ENCODE measurements at regions of chr5 and their contacts with region 1.

Region 1: GRCh38 chr5:132180134-132180745 is 47.4 kb downstream of the P4HA2 start:
- DNase-seq: peak; percentile 82
- H3K4me3 Mint-ChIP-seq: no peak overlapping the region
- H3K27ac Mint-ChIP-seq: no peak overlapping the region
- H3K4me1 Mint-ChIP-seq: peaks cover 16% of the 10 kb centered on the region
- H3K27me3 Mint-ChIP-seq: no peaks in the 10 kb centered on the region
- CTCF ChIP-seq: peak; percentile 89

Region 2: GRCh38 chr5:132073231-132074013 is 106.8 kb before region 1 on chr5 and contains the start of gene CSF2:
- CTCF ChIA-PET with region 1: interaction called, 12 read pairs
- POLR2A ChIA-PET with region 1: no interaction called
- intact Hi-C with region 1: no loop called
- DNase-seq: peak; percentile 85
- H3K4me3 Mint-ChIP-seq: peak within 1 kb of the TSS; percentile 35
- H3K27ac Mint-ChIP-seq: no peak within 1 kb of the TSS
- H3K4me1 Mint-ChIP-seq: peaks cover 25% of the 10 kb centered on the region
- H3K27me3 Mint-ChIP-seq: no peaks in the 10 kb centered on the region
- CTCF ChIP-seq: no peak
- total RNA-seq, gene CSF2: not detected in 2 replicates

Region 3: DNA sequence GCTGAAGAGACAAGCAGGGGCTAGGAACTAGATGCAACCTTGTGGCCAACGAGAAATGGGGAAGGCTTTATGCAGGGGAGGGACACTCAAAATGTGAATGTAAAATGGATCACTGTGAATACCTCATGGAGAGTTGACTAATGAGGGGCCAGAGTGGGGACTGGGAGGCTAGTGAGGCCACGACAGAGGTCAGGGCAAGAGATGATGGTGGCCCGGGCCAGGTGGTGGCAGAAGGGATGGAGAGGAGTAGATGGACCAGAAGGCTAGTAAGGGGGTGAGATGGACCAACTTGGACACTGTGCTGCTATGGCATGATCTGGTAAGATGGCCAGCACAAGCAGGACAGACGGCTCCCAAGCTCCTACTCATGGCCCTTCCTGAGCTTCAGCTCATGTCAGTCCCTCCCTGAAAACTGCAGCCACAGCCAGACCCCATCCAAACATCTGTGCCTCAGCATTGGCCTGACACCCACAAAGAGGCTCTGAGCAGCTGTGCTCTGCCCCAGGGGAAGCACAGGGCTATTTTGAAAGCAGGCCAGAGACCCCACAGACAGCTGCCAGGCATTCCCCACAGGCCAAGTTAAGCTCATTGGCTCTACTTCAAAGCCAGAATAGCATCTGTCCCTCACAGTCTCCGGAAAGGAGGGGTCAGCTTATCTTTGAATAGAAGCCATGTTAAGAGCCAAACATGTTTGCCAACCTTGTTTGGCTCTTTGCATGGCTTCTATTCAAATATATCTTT is 25.3 kb after region 1 on chr5:
- CTCF ChIA-PET with region 1: interaction called, 19 read pairs
- POLR2A ChIA-PET with region 1: interaction called, 3 read pairs
- intact Hi-C with region 1: no loop called
- DNase-seq: no peak
- H3K4me3 Mint-ChIP-seq: no peak overlapping the region
- H3K27ac Mint-ChIP-seq: no peak overlapping the region
- H3K4me1 Mint-ChIP-seq: peaks cover 12% of the 10 kb centered on the region
- H3K27me3 Mint-ChIP-seq: no peaks in the 10 kb centered on the region
- CTCF ChIP-seq: no peak

Region 4: GRCh38 chr5:132227485-132228240 is 47.4 kb after region 1 on chr5 and contains the start of gene P4HA2:
- CTCF ChIA-PET with region 1: interaction called, 18 read pairs
- POLR2A ChIA-PET with region 1: interaction called, 3 read pairs
- intact Hi-C with region 1: loop called (anchors 1 kb)
- DNase-seq: peak; percentile 86
- H3K4me3 Mint-ChIP-seq: peak within 1 kb of the TSS; percentile 74
- H3K27ac Mint-ChIP-seq: no peak within 1 kb of the TSS
- H3K4me1 Mint-ChIP-seq: peaks cover 32% of the 10 kb centered on the region
- H3K27me3 Mint-ChIP-seq: no peaks in the 10 kb centered on the region
- CTCF ChIP-seq: peak; percentile 21
- total RNA-seq, gene P4HA2: 53.1 and 91.1 TPM in 2 replicates

Region 5: GRCh38 chr5:132310141-132310834 is 130.0 kb after region 1 on chr5:
- CTCF ChIA-PET with region 1: interaction called, 3 read pairs
- POLR2A ChIA-PET with region 1: no interaction called
- intact Hi-C with region 1: loop called (anchors 5 kb)
- DNase-seq: no peak
- H3K4me3 Mint-ChIP-seq: no peak overlapping the region
- H3K27ac Mint-ChIP-seq: no peak overlapping the region
- H3K4me1 Mint-ChIP-seq: peaks cover 17% of the 10 kb centered on the region
- H3K27me3 Mint-ChIP-seq: no peaks in the 10 kb centered on the region
- CTCF ChIP-seq: no peak

Region 6: GRCh38 chr5:132410451-132411381 is 230.5 kb after region 1 on chr5:
- CTCF ChIA-PET with region 1: interaction called, 5 read pairs
- POLR2A ChIA-PET with region 1: no interaction called
- intact Hi-C with region 1: loop called (anchors 1 kb)
- DNase-seq: peak; percentile 78
- H3K4me3 Mint-ChIP-seq: peak overlapping the region; percentile 80
- H3K27ac Mint-ChIP-seq: peak overlapping the region; percentile 93
- H3K4me1 Mint-ChIP-seq: peaks cover 27% of the 10 kb centered on the region
- H3K27me3 Mint-ChIP-seq: no peaks in the 10 kb centered on the region
- CTCF ChIP-seq: peak; percentile 95

Region 7: DNA sequence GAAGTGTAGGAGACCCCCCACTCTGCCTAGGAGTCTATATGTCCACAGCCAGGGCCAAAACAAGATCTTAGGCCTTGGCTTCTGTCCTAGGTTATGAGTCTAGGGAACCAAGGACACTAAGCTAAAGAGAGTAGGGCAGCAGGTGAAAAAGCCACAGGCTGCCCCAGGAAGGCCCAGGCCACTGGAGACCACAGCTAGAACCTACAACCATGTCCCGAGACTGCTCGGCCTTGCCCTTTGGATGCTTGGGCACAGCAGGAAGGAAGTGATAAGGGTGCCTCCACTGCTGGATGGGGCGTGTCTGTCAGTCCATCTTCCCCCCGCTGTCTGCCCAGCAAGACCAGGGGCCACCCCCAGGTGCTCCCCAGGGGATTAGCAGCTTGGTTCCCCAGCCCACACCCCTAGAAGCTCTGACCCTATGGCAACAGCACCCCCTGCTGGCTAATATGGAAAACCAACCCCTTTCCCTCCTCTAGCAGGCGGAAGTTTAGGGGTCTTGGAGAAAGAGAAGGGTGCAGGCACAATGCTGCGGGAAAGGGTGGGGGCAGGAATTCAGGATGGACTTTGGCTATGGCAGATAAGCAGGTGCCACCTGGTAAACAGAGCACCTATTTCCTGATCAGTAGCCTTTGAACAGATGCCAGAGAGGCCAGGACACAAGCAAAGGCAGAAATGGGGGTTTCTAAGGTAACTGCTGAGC is 320.8 kb after region 1 on chr5:
- CTCF ChIA-PET with region 1: interaction called, 35 read pairs
- POLR2A ChIA-PET with region 1: interaction called, 6 read pairs
- intact Hi-C with region 1: loop called (anchors 1 kb)
- DNase-seq: peak; percentile 91
- H3K4me3 Mint-ChIP-seq: no peak overlapping the region
- H3K27ac Mint-ChIP-seq: peak overlapping the region; percentile 83
- H3K4me1 Mint-ChIP-seq: peaks cover 35% of the 10 kb centered on the region
- H3K27me3 Mint-ChIP-seq: no peaks in the 10 kb centered on the region
- CTCF ChIP-seq: peak; percentile 99